ENCODE measurements at regions of chr14 and their contacts with region 1.

Region 1: GRCh38 chr14:58501214-58501816 is 73.8 kb downstream of the KIAA0586 start:
- DNase-seq: no peak
- H3K4me3 Mint-ChIP-seq: no peak overlapping the region
- H3K27ac Mint-ChIP-seq: no peak overlapping the region
- H3K4me1 Mint-ChIP-seq: no peaks in the 10 kb centered on the region
- H3K27me3 Mint-ChIP-seq: no peaks in the 10 kb centered on the region

Region 2: DNA sequence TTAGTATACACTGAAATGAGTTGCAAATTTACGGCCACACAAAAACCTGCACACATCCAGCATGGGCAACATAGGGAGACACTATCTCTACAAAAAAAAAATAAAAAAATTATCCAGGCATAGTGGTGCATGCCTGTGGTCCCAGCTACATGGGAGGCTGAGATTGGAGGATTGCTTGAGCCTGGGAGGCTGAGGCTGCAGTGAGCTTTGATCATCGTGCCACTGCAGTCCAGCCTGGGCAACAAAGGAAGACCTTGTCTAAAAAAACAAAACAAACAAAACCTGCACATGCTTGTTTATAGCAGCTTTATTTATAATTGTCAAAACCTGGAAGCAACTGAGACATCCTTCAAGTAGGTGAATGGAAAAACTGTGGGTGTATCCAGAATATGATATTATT is 110.5 kb before region 1 on chr14:
- CTCF ChIA-PET with region 1: no interaction called
- POLR2A ChIA-PET with region 1: no interaction called
- intact Hi-C with region 1: no loop called
- DNase-seq: no peak
- H3K4me3 Mint-ChIP-seq: no peak overlapping the region
- H3K27ac Mint-ChIP-seq: no peak overlapping the region
- H3K4me1 Mint-ChIP-seq: peaks cover 6% of the 10 kb centered on the region
- H3K27me3 Mint-ChIP-seq: no peaks in the 10 kb centered on the region

Region 3: DNA sequence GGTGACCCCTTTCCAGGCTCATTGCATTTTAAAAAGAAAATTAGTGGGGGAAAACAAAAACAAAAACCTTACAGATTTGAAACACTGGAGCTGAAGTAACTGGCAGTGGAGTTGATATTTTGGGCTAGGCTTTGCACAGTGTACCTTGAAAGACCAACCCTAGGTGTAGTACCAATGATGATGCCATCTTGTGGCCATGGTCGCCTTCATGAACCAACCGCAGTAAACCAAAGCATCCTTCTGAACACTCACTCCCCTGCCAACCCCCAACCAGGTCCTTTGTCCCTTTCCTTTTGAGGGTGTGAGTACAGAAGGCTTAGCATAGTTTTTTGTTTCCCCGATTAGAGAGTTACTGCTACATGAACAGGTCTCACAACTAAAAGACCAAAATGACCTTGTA is 99.7 kb before region 1 on chr14:
- CTCF ChIA-PET with region 1: no interaction called
- POLR2A ChIA-PET with region 1: no interaction called
- intact Hi-C with region 1: no loop called
- DNase-seq: no peak
- H3K4me3 Mint-ChIP-seq: no peak overlapping the region
- H3K27ac Mint-ChIP-seq: no peak overlapping the region
- H3K4me1 Mint-ChIP-seq: peaks cover under 1% of the 10 kb centered on the region
- H3K27me3 Mint-ChIP-seq: no peaks in the 10 kb centered on the region

Region 4: GRCh38 chr14:58488550-58488949 is 12.8 kb before region 1 on chr14:
- CTCF ChIA-PET with region 1: interaction called, 34 read pairs
- POLR2A ChIA-PET with region 1: no interaction called
- intact Hi-C with region 1: no loop called
- DNase-seq: peak; percentile 38
- H3K4me3 Mint-ChIP-seq: no peak overlapping the region
- H3K27ac Mint-ChIP-seq: no peak overlapping the region
- H3K4me1 Mint-ChIP-seq: peaks cover 7% of the 10 kb centered on the region
- H3K27me3 Mint-ChIP-seq: no peaks in the 10 kb centered on the region

Region 5: GRCh38 chr14:58533446-58533845 is 32.1 kb after region 1 on chr14:
- CTCF ChIA-PET with region 1: no interaction called
- POLR2A ChIA-PET with region 1: no interaction called
- intact Hi-C with region 1: no loop called
- DNase-seq: no peak
- H3K4me3 Mint-ChIP-seq: no peak overlapping the region
- H3K27ac Mint-ChIP-seq: no peak overlapping the region
- H3K4me1 Mint-ChIP-seq: no peaks in the 10 kb centered on the region
- H3K27me3 Mint-ChIP-seq: no peaks in the 10 kb centered on the region

Region 6: GRCh38 chr14:58555647-58556046 is 54.3 kb after region 1 on chr14:
- CTCF ChIA-PET with region 1: interaction called, 10 read pairs
- POLR2A ChIA-PET with region 1: no interaction called
- intact Hi-C with region 1: no loop called
- DNase-seq: no peak
- H3K4me3 Mint-ChIP-seq: no peak overlapping the region
- H3K27ac Mint-ChIP-seq: no peak overlapping the region
- H3K4me1 Mint-ChIP-seq: peaks cover 4% of the 10 kb centered on the region
- H3K27me3 Mint-ChIP-seq: no peaks in the 10 kb centered on the region

Region 7: GRCh38 chr14:58637391-58638230 is 136.3 kb after region 1 on chr14 and contains the start of gene DACT1:
- CTCF ChIA-PET with region 1: interaction called, 9 read pairs
- POLR2A ChIA-PET with region 1: no interaction called
- intact Hi-C with region 1: loop called (anchors 1 kb)
- DNase-seq: peak; percentile 72
- H3K4me3 Mint-ChIP-seq: peak within 1 kb of the TSS; percentile 79
- H3K27ac Mint-ChIP-seq: peak within 1 kb of the TSS; percentile 53
- H3K4me1 Mint-ChIP-seq: peaks cover 33% of the 10 kb centered on the region
- H3K27me3 Mint-ChIP-seq: peaks cover 37% of the 10 kb centered on the region
- total RNA-seq, gene DACT1: 4.3 to 4.7 TPM

Region 8: DNA sequence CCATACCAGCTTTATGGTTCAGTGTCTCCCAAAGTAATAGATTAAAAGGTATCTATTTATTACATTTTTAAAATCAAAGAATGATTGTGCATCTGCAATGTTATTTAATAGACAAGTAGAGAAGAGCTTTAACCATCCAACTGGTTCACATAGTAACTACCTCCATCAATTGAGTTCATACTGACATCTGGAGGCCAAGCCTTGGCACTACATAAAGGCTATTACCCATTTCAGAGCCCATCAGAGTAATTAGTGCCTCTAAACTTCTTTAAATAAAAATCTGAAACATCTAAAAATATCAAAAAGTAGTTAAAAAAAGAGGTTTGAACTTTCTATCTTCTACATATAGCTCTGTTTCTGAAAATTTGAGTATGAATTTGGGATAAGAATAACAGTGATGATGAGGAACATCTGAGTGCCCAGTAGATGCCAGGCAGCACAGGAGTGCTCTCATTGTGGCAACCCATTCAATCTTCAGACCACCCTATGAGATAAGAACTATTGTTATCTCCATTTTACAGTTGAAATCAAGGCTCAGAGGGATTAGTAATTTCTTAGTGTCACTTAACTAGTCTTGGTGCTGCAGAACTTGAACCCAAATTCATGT is 554.2 kb after region 1 on chr14:
- CTCF ChIA-PET with region 1: interaction called, 22 read pairs
- POLR2A ChIA-PET with region 1: no interaction called
- intact Hi-C with region 1: loop called (anchors 1 kb)
- DNase-seq: peak; percentile 16
- H3K4me3 Mint-ChIP-seq: no peak overlapping the region
- H3K27ac Mint-ChIP-seq: no peak overlapping the region
- H3K4me1 Mint-ChIP-seq: no peaks in the 10 kb centered on the region
- H3K27me3 Mint-ChIP-seq: peaks cover 5% of the 10 kb centered on the region

Measured in activated CD4-positive, alpha-beta memory T cell treated with anti-CD3 and anti-CD28 coated beads for 36 hours (primary cell).